Activated T-helper 2 cell treated with anti-CD3 and anti-CD28 coated beads, Interferon-gamma antibody, Interleukin-2, Interleukin-4, amounts not matched to agents 10 μg/mL and 5 μg/mL and 100 μg/mL, durations not matched to agents 14 hours and 24 hours and 36 hours (primary cell): ENCODE measurements at regions of chr2 and their contacts with region 1.

Region 1: GRCh38 chr2:181104512-181105115 is 124.2 kb downstream of the UBE2E3 start:
- DNase-seq: no peak
- H3K4me3 Mint-ChIP-seq: no peak overlapping the region
- H3K27ac Mint-ChIP-seq: peak overlapping the region; percentile 34
- H3K4me1 Mint-ChIP-seq: peaks cover 51% of the 10 kb centered on the region
- H3K27me3 Mint-ChIP-seq: no peaks in the 10 kb centered on the region

Region 2: DNA sequence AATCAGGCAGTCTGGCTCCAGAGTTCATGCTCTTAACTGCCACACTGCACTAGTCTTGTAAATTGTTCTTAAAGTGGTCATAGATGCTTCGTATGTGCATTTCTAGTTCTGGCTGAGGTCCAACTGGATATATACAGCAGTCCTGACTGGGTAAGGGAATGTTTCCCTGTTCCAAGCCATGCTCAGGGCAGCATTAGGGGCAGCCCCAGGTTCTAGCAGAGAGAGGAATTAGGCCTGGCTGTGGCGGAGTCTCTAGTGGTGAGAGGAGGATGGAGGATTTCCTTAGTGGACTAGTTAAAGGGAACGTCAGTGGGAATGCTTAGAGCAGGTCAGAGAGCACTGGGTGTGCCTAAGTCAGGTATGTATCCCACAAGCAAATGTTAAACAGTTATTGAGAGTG is 96.2 kb before region 1 on chr2:
- intact Hi-C with region 1: no loop called
- DNase-seq: no peak
- H3K4me3 Mint-ChIP-seq: no peak overlapping the region
- H3K27ac Mint-ChIP-seq: no peak overlapping the region
- H3K4me1 Mint-ChIP-seq: peaks cover under 1% of the 10 kb centered on the region
- H3K27me3 Mint-ChIP-seq: no peaks in the 10 kb centered on the region

Region 3: GRCh38 chr2:181142514-181142913 is 37.9 kb after region 1 on chr2:
- intact Hi-C with region 1: loop called (anchors 1 kb)
- DNase-seq: no peak
- H3K4me3 Mint-ChIP-seq: peak overlapping the region; percentile 81
- H3K27ac Mint-ChIP-seq: peak overlapping the region; percentile 94
- H3K4me1 Mint-ChIP-seq: peaks cover 74% of the 10 kb centered on the region
- H3K27me3 Mint-ChIP-seq: no peaks in the 10 kb centered on the region

Region 4: GRCh38 chr2:181197140-181197760 is 92.6 kb after region 1 on chr2:
- intact Hi-C with region 1: loop called (anchors 5 kb)
- DNase-seq: no peak
- H3K4me3 Mint-ChIP-seq: peak overlapping the region; percentile 37
- H3K27ac Mint-ChIP-seq: peak overlapping the region; percentile 80
- H3K4me1 Mint-ChIP-seq: peaks cover 47% of the 10 kb centered on the region
- H3K27me3 Mint-ChIP-seq: no peaks in the 10 kb centered on the region

Region 5: DNA sequence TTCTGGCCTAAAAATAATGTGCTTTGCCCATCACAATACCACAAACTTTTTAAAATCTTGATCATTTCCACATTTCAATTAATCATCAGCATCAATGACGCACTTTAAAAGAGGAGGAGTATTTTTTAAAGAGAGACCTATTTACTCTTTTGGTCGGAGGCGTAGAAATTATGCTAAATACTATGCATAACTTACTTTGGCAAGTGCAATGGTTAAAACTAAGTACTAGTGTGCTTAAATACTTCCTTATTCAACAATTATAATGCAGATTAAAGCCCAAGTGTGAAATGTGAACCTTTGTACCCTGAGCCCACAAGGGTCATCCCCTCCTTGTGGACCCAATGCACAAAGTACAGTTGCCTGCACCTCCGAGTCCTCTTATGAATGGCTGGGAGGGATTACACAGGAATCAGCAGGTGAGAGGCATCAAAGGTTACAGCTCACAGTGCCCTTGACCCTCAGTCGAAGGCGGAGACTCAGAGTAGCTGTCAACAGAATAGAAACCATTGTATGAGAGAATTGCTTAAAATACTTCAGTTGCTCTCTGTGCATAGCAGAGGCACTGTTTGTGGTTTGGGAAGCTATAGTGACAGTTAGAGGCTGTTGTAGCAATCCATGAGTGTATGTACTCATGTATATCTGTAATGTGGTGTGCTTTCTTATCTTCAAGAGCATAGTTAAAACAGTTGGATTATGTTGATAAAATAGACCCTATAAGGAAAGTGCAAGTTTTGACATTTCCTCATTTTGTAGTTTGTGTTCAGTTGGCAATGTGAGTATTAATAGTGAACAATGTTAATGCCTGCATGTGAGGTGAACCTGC is 200.9 kb after region 1 on chr2:
- intact Hi-C with region 1: loop called (anchors 1 kb)
- DNase-seq: peak; percentile 70
- H3K4me3 Mint-ChIP-seq: peak overlapping the region; percentile 70
- H3K27ac Mint-ChIP-seq: peak overlapping the region; percentile 93
- H3K4me1 Mint-ChIP-seq: peaks cover 74% of the 10 kb centered on the region
- H3K27me3 Mint-ChIP-seq: no peaks in the 10 kb centered on the region

Region 6: GRCh38 chr2:181354626-181355025 is 250.0 kb after region 1 on chr2:
- intact Hi-C with region 1: loop called (anchors 2 kb)
- DNase-seq: no peak
- H3K4me3 Mint-ChIP-seq: no peak overlapping the region
- H3K27ac Mint-ChIP-seq: no peak overlapping the region
- H3K4me1 Mint-ChIP-seq: peaks cover 41% of the 10 kb centered on the region
- H3K27me3 Mint-ChIP-seq: no peaks in the 10 kb centered on the region

Region 7: GRCh38 chr2:181523756-181524155 is 419.1 kb after region 1 on chr2:
- intact Hi-C with region 1: loop called (anchors 5 kb)
- DNase-seq: no peak
- H3K4me3 Mint-ChIP-seq: no peak overlapping the region
- H3K27ac Mint-ChIP-seq: no peak overlapping the region
- H3K4me1 Mint-ChIP-seq: peaks cover 6% of the 10 kb centered on the region
- H3K27me3 Mint-ChIP-seq: no peaks in the 10 kb centered on the region

Region 8: GRCh38 chr2:181790716-181791649 is 686.4 kb after region 1 on chr2:
- intact Hi-C with region 1: loop called (anchors 5 kb)
- DNase-seq: peak; percentile 21
- H3K4me3 Mint-ChIP-seq: peak overlapping the region; percentile 22
- H3K27ac Mint-ChIP-seq: peak overlapping the region; percentile 71
- H3K4me1 Mint-ChIP-seq: peaks cover 34% of the 10 kb centered on the region
- H3K27me3 Mint-ChIP-seq: no peaks in the 10 kb centered on the region